ENCODE measurements at regions of chr9 and their contacts with region 1.

Region 1: DNA sequence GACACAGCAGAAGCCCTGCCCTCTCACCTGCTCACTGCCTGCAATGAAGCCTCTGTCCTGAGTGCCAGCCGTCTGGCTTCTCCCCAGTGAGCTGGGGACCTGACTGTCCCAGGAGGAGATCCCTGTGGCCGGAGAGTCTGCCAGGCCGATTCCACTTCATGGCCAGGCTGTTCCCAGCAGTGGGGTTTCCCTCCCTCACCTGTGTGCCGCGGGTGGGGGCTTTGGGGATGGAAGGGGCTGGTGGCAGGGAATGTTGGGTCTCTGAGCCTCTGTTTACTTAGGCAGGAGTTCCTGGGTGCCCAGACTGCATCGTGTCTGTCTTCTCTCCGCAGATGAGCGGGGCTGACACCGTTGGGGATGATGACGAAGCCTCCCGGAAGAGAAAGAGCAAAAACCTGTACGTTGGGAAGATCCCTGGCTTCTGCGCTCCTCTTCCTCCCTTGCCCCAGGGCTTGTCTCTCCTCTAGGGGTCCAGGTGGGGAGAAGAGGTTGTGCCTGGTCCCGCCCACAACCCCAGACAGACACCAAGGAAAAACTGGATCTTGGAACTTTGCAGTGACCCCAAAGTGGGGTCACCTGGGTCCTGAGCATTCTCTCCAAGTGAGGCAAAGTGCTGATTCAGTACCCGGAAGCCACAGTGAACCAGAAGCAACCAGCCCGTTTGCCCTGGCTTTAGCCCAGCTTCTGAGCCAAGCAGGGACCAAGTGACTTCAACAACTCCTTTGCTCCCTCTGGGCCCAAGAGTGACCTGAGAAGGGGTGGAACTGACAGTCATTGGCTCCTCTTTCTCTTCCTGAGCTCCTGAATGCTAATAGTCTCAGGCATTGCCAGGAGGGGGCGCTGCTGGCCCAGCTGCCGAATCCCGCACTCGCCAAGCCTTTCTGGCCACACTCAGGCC is 127.7 kb downstream of the RGS3 start:
- DNase-seq: peak; percentile 74
- H3K4me3 ChIP-seq: no peak overlapping the region
- H3K27ac ChIP-seq: no peak overlapping the region
- H3K4me1 ChIP-seq: peaks cover 6% of the 10 kb centered on the region
- H3K27me3 ChIP-seq: no peaks in the 10 kb centered on the region
- CTCF ChIP-seq: peak; percentile 90

Region 2: GRCh38 chr9:113416149-113416721 is 175.0 kb before region 1 on chr9:
- intact Hi-C with region 1: no loop called
- DNase-seq: no peak
- H3K4me3 ChIP-seq: no peak overlapping the region
- H3K27ac ChIP-seq: peak overlapping the region; percentile 29
- H3K4me1 ChIP-seq: no peaks in the 10 kb centered on the region
- H3K27me3 ChIP-seq: no peaks in the 10 kb centered on the region
- CTCF ChIP-seq: no peak

Region 3: DNA sequence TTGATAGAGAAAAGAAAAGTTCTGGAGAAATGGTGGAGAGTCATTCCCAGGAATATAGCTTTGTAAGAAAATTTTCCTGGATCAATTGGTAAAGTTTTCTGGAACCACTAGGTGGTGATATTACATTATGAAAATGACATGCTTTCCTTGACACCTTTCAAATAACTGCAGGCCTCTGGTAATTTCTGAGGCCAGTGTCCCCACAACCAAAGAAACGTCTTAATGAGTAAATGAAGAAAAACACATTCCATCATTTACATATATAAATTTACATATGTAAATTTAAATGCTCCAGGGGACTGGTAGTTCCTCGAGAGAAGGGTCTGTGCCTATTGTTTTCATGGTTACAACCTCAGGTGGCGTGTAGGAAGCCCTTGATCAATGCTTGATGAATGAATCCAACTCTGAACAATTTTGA is 144.9 kb before region 1 on chr9:
- intact Hi-C with region 1: loop called (anchors 2 kb)
- DNase-seq: no peak
- H3K4me3 ChIP-seq: no peak overlapping the region
- H3K27ac ChIP-seq: no peak overlapping the region
- H3K4me1 ChIP-seq: no peaks in the 10 kb centered on the region
- H3K27me3 ChIP-seq: no peaks in the 10 kb centered on the region
- CTCF ChIP-seq: peak; percentile 55